IMR-90 (cell line): ENCODE measurements at regions of chr7 and their contacts with region 1.

Region 1: DNA sequence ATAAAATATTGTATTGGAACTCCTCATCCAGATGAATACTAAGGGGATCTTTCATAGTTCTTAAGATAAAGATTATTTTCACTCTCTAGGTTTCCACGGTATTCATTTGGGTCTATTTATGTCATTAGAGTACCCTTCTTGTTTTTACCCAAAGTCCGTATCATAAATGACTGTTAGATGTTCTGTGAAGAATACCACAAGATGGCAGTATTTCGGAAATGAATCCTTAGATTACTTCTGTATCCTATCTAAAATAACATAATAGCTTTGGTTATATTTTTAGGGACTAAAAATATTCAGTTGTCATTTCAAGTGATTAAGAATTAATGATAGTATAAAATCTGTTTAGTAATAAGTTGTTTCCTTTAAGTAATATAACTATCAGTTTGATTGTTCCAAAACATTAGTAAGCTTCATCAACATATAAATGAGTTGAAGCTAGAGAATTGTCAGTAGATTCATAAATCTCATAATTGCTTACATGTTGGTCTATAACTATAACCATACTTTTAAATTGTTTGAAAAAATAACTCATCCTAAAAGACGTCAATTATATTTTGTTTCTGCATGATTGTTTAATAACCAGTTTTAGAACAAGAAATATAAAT is 337.5 kb upstream of the KCND2 start:
- DNase-seq: peak; percentile 62
- ATAC-seq: peak; percentile 77
- H3K4me3 ChIP-seq: no peak overlapping the region
- H3K27ac ChIP-seq: no peak overlapping the region
- H3K4me1 ChIP-seq: no peaks in the 10 kb centered on the region
- H3K27me3 ChIP-seq: no peaks in the 10 kb centered on the region
- CTCF ChIP-seq: peak; percentile 63
- POLR2A ChIP-seq: no peak
- RAD21 ChIP-seq: peak; percentile 63

Region 2: DNA sequence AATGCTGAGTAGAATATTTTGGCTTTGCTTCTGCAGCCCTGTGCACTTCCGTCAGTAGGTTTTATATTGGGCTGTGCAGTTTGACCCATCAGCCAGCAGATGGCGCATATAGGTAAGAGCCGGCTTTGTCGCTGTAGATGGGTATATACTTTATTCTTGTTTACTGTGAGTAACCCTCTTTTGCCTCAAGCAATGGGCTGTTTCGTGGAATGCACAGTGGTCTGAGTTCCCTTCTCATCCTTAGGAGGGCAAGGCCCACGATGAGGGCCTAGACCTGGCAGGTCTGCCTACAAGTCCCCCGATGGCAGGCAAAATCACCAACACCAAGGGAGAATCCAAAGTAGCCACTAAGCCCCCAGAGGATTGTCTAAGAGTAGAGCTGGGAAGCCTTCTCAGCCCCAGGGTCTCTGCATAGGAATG is 665.5 kb before region 1 on chr7:
- CTCF ChIA-PET with region 1: no interaction called
- POLR2A ChIA-PET with region 1: no interaction called
- dilution Hi-C with region 1: no loop called
- in situ Hi-C with region 1: no loop called
- intact Hi-C with region 1: loop called (anchors 5 kb)
- DNase-seq: peak; percentile 55
- ATAC-seq: peak; percentile 95
- H3K4me3 ChIP-seq: no peak overlapping the region
- H3K27ac ChIP-seq: no peak overlapping the region
- H3K4me1 ChIP-seq: no peaks in the 10 kb centered on the region
- H3K27me3 ChIP-seq: no peaks in the 10 kb centered on the region
- CTCF ChIP-seq: peak; percentile 78
- POLR2A ChIP-seq: no peak
- RAD21 ChIP-seq: peak; percentile 66

Region 3: GRCh38 chr7:120052884-120053382 is 117.4 kb after region 1 on chr7:
- CTCF ChIA-PET with region 1: interaction called, 3 read pairs
- POLR2A ChIA-PET with region 1: no interaction called
- dilution Hi-C with region 1: no loop called
- in situ Hi-C with region 1: no loop called
- intact Hi-C with region 1: loop called (anchors 5 kb)
- DNase-seq: peak; percentile 99
- ATAC-seq: peak; percentile 89
- H3K4me3 ChIP-seq: no peak overlapping the region
- H3K27ac ChIP-seq: peak overlapping the region; percentile 99
- H3K4me1 ChIP-seq: peaks cover 23% of the 10 kb centered on the region
- H3K27me3 ChIP-seq: no peaks in the 10 kb centered on the region
- CTCF ChIP-seq: no peak
- POLR2A ChIP-seq: no peak; the same call in 1 of the 2 replicates
- RAD21 ChIP-seq: no peak

Region 4: GRCh38 chr7:120089968-120090367 is 154.4 kb after region 1 on chr7:
- CTCF ChIA-PET with region 1: interaction called, 3 read pairs
- POLR2A ChIA-PET with region 1: no interaction called
- dilution Hi-C with region 1: no loop called
- in situ Hi-C with region 1: no loop called
- intact Hi-C with region 1: loop called (anchors 1 kb)
- DNase-seq: peak; percentile 42
- ATAC-seq: no peak
- H3K4me3 ChIP-seq: no peak overlapping the region
- H3K27ac ChIP-seq: no peak overlapping the region
- H3K4me1 ChIP-seq: no peaks in the 10 kb centered on the region
- H3K27me3 ChIP-seq: no peaks in the 10 kb centered on the region
- CTCF ChIP-seq: peak; percentile 37
- POLR2A ChIP-seq: no peak
- RAD21 ChIP-seq: peak; percentile 45

Region 5: GRCh38 chr7:120554960-120555571 is 619.5 kb after region 1 on chr7:
- CTCF ChIA-PET with region 1: no interaction called
- POLR2A ChIA-PET with region 1: no interaction called
- dilution Hi-C with region 1: no loop called
- in situ Hi-C with region 1: no loop called
- intact Hi-C with region 1: loop called (anchors 2 kb)
- DNase-seq: peak; percentile 47
- ATAC-seq: peak; percentile 86
- H3K4me3 ChIP-seq: no peak overlapping the region
- H3K27ac ChIP-seq: no peak overlapping the region
- H3K4me1 ChIP-seq: no peaks in the 10 kb centered on the region
- H3K27me3 ChIP-seq: no peaks in the 10 kb centered on the region; the same call in 1 of the 2 replicates
- CTCF ChIP-seq: peak; percentile 71
- POLR2A ChIP-seq: no peak
- RAD21 ChIP-seq: peak; percentile 75

Region 6: GRCh38 chr7:120725376-120726039 is 790.0 kb after region 1 on chr7:
- CTCF ChIA-PET with region 1: no interaction called
- POLR2A ChIA-PET with region 1: no interaction called
- dilution Hi-C with region 1: no loop called
- in situ Hi-C with region 1: no loop called
- intact Hi-C with region 1: loop called (anchors 10 kb)
- DNase-seq: peak; percentile 45
- ATAC-seq: no peak
- H3K4me3 ChIP-seq: no peak overlapping the region
- H3K27ac ChIP-seq: no peak overlapping the region
- H3K4me1 ChIP-seq: peaks cover 2% of the 10 kb centered on the region
- H3K27me3 ChIP-seq: peaks cover 4% of the 10 kb centered on the region
- CTCF ChIP-seq: peak; percentile 61
- POLR2A ChIP-seq: no peak
- RAD21 ChIP-seq: peak; percentile 44